ENCODE measurements at regions of chr2 and their contacts with region 1.

Region 1: DNA sequence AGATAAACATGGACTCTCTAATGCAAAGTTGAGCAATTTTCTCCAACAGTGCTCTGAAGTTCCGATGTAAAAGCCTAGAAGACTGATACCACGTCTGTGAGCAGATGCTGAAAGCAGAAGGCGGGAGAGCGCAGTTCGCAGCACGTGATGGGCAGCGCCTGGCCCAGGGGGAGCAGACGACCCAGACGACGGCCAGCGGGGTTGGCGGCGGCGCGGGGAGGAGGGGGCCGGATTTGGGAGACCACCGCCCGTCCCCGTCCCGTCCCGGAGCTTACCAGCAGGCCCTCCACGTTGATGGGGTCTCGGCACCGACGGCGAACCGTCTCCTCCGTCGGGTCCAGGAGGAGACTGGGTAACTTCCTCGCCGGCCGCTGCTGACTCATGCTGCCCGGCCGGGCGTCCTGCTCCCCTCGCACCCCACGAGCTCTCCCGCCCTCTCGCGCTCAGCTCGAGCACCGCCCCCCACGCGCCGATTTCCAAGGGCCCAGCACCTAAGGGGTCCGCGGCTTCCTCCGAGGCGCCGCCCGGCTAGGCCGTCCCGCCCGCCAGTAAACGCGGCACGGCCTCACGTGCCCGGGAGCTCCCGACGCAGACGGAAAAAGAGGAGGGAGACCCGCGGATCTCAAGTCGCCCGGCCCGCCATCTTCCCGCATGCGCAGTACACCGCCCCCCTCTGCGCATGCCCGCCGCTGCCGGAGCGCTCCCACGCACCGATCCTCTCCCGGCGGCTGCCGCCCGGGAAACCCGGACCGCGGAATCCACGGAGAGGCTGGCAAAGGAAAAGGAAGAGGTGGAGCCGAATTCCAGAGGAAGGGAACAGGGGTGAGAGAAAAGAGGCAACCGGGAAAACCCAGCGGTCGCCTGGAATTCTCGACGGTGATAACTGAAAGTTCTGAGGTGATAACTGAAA is at the start of gene E2F6:
- DNase-seq: peak; percentile 94
- H3K4me3 ChIP-seq: peak within 1 kb of the TSS; percentile 46 to 66 (median 60)
- H3K27ac ChIP-seq: peak within 1 kb of the TSS; percentile 87 to 92 (median 91)
- H3K4me1 ChIP-seq: peaks cover 8 to 35% (median 19%) of the 10 kb centered on the region in 4 donors
- H3K27me3 ChIP-seq: no peaks in the 10 kb centered on the region
- CTCF ChIP-seq: no peak
- EP300 ChIP-seq: no peak
- POLR2A ChIP-seq: peak; percentile 73
- total RNA-seq, gene E2F6: 6.0 to 19.8 (median 6.9) TPM

Region 2: GRCh38 chr2:9613291-9613690 is 1852.5 kb before region 1 on chr2:
- in situ Hi-C with region 1: no loop called
- intact Hi-C with region 1: loop called (anchors 5 kb)
- DNase-seq: no peak
- H3K4me3 ChIP-seq: no peak overlapping the region
- H3K27ac ChIP-seq: no peak overlapping the region
- H3K4me1 ChIP-seq: peaks cover 18 to 77% (median 39%) of the 10 kb centered on the region in 4 donors
- H3K27me3 ChIP-seq: no peaks in the 10 kb centered on the region
- CTCF ChIP-seq: no peak
- EP300 ChIP-seq: no peak
- POLR2A ChIP-seq: no peak

Region 3: DNA sequence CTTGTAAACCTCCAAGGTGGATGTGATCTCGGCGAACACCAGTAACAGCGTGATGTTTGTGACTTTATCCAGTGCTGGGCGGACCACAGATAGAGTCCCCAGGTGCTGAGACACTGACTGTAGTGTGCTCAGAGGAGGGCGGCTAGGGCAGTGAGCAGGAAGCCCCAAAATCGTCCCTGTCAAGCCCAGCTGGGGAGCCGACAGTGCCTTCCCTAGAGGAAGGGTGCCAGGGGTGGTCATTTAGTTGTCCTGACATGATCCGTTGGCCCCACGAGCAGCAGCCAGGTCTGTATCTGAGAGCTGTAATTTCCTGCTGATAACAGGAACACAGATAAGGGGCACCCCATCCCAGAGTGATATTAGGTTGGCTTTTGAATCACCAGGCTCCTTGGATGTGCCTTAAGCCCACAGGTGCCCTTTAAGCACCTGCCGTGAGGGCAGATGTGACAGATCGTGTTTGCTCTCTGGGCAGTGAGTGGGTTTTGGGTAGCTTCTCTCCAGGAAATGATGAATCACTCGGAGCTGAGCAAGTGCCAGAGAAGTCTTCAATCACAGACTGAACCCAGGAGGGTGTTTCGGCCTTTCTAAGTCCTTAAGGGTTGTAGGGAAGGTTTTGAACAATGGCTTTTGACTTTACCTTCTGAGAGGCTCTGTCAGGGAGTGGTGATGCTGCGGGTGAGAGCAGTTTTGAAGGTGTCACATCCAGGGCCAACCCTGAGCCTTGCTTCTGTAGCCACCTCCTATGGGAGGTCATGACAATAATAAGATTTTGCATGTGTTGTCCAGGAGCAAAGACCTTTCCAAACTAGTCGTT is 288.3 kb after region 1 on chr2:
- in situ Hi-C with region 1: loop called in 1 of 4 experiments (anchors 25 kb)
- intact Hi-C with region 1: no loop called
- DNase-seq: peak; percentile 65
- H3K4me3 ChIP-seq: peak overlapping the region in 3 of 4 donors; percentile 7 to 36 (median 24)
- H3K27ac ChIP-seq: peak overlapping the region; percentile 84 to 92 (median 86)
- H3K4me1 ChIP-seq: peaks cover 15 to 51% (median 26%) of the 10 kb centered on the region in 4 donors
- H3K27me3 ChIP-seq: no peaks in the 10 kb centered on the region
- CTCF ChIP-seq: no peak
- EP300 ChIP-seq: no peak
- POLR2A ChIP-seq: peak; percentile 19